ENCODE measurements at regions of chr12 and their contacts with region 1.

Region 1: GRCh38 chr12:78194448-78194847 is 363.8 kb downstream of the NAV3 start:
- DNase-seq: no peak

Region 2: GRCh38 chr12:78229591-78230101 is 35.2 kb after region 1 on chr12:
- intact Hi-C with region 1: no loop called
- DNase-seq: no peak

Region 3: GRCh38 chr12:78863482-78864402 is 669.3 kb after region 1 on chr12:
- intact Hi-C with region 1: loop called (anchors 10 kb)
- DNase-seq: peak in 9 of 10 donors; percentile 43 to 95 (median 65)